ENCODE measurements at regions of chr1 and their contacts with region 1.

Region 1: DNA sequence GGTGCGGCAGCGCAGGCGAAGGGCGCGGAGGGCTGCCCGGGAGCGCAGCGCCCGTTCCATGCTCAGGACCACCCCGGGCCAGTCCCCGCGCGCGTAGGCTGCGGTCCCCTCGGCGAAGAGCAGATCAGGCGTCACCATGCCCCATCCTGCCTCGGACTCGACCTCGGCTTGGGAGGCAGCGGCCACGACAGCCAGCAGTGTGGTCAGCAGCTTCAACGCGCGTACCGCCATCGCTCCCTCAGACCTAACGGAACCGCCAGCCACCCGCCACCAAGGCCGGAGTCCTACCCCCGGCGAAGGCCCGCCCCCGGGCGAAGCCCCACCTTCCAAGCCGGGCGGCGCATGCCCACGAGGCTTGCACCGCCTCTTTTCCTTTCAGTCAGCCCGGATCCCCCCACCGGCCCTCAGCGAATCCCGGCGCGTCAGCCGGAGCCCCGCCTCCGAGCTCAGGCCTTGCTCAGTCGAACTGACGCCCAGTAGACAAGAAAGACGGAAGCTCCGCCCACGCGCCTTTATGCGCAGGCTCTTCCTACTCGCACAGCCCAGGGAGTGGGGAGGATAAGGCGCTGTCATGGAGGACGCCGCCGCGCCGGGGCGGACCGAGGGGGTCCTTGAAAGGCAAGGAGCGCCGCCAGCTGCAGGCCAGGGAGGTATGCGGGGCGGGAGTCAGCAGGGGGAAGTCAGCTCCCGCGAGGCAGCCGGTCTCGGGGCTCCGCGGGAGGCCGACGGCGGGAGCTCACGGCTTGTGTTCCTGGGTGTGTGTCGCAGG is at the starts of genes C1orf50 and P3H1:
- DNase-seq: peak; percentile 97
- H3K4me3 ChIP-seq: peak within 1 kb of the TSS; percentile 69
- H3K27me3 ChIP-seq: no peaks in the 10 kb centered on the region
- CTCF ChIP-seq: no peak
- polyA plus RNA-seq, gene C1orf50: 2.0 and 4.2 TPM in 2 replicates
- polyA plus RNA-seq, gene P3H1: 167 and 228 TPM in 2 replicates

Region 2: GRCh38 chr1:42777852-42778251 is 10.9 kb after region 1 on chr1:
- CTCF ChIA-PET with region 1: interaction called, 34 read pairs
- POLR2A ChIA-PET with region 1: no interaction called
- DNase-seq: no peak
- H3K4me3 ChIP-seq: no peak overlapping the region
- H3K27me3 ChIP-seq: no peaks in the 10 kb centered on the region
- CTCF ChIP-seq: peak; percentile 79

Region 3: DNA sequence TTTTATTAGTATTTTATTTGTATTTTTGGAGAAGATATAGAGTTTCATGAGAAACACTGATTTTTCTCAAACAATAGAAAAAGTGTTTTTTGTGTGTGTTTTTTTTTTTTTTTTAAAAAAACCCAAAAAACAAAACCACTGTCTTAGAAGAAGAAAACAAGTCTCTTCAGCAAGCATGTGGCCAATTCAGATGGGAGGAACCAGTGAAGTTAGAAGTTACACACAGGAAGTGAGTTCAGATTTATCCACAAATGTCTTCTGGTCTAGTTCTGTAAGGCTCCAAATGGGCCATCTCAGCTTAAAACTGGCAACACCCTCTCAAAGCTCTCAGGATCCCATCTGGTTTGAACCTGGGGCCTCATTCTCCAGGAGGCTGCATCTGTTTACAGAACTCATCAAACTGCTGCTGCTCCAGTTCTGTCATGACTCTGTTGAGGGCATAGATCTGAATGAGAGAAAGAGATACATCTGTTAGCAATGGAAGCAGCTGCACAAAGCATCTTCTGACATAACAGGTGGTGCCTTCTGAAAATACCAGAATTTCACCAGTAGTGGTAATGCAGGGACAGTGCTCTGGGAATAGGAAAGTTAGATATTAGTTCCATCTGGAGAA is 40.2 kb after region 1 on chr1:
- CTCF ChIA-PET with region 1: interaction called, 10 read pairs
- POLR2A ChIA-PET with region 1: no interaction called
- DNase-seq: no peak
- H3K4me3 ChIP-seq: no peak overlapping the region
- H3K27me3 ChIP-seq: no peaks in the 10 kb centered on the region
- CTCF ChIP-seq: no peak